CD8-positive, alpha-beta T cell (primary cell): ENCODE measurements at regions of chr5 and their contacts with region 1.

Region 1: GRCh38 chr5:127564002-127564769 is 46.7 kb downstream of the PRRC1 start:
- DNase-seq: peak in 7 of 9 experiments; percentile 12 to 77 (median 51)
- ATAC-seq: peak; percentile 72
- H3K4me3 ChIP-seq: no peak overlapping the region
- H3K4me3 Mint-ChIP-seq: no peak overlapping the region
- H3K27ac ChIP-seq: no peak overlapping the region
- H3K27ac Mint-ChIP-seq: no peak overlapping the region
- H3K4me1 ChIP-seq: no peaks in the 10 kb centered on the region
- H3K4me1 Mint-ChIP-seq: peaks cover 6% of the 10 kb centered on the region
- H3K27me3 ChIP-seq: no peaks in the 10 kb centered on the region
- H3K27me3 Mint-ChIP-seq: peaks cover 6% of the 10 kb centered on the region
- CTCF ChIP-seq: peak; percentile 71

Region 2: GRCh38 chr5:127785098-127785927 is 221.1 kb after region 1 on chr5:
- CTCF ChIA-PET with region 1: no interaction called
- POLR2A ChIA-PET with region 1: no interaction called
- intact Hi-C with region 1: no loop called
- DNase-seq: peak in 3 of 9 experiments; percentile 29 to 66 (median 64)
- ATAC-seq: peak; percentile 80
- H3K4me3 ChIP-seq: no peak overlapping the region
- H3K4me3 Mint-ChIP-seq: no peak overlapping the region
- H3K27ac ChIP-seq: peak overlapping the region in 1 of 2 experiments; percentile 45
- H3K27ac Mint-ChIP-seq: peak overlapping the region; percentile 81
- H3K4me1 ChIP-seq: no peaks in the 10 kb centered on the region
- H3K4me1 Mint-ChIP-seq: peaks cover 10% of the 10 kb centered on the region
- H3K27me3 ChIP-seq: no peaks in the 10 kb centered on the region
- H3K27me3 Mint-ChIP-seq: no peaks in the 10 kb centered on the region
- CTCF ChIP-seq: no peak

Region 3: GRCh38 chr5:128498844-128499455 is 934.8 kb after region 1 on chr5:
- CTCF ChIA-PET with region 1: no interaction called
- POLR2A ChIA-PET with region 1: no interaction called
- intact Hi-C with region 1: loop called in 1 of 2 experiments (anchors 5 kb)
- DNase-seq: peak in 1 of 9 experiments; percentile 4
- ATAC-seq: no peak
- H3K4me3 ChIP-seq: no peak overlapping the region
- H3K4me3 Mint-ChIP-seq: no peak overlapping the region
- H3K27ac ChIP-seq: no peak overlapping the region
- H3K27ac Mint-ChIP-seq: no peak overlapping the region
- H3K4me1 ChIP-seq: no peaks in the 10 kb centered on the region
- H3K4me1 Mint-ChIP-seq: no peaks in the 10 kb centered on the region
- H3K27me3 ChIP-seq: no peaks in the 10 kb centered on the region
- H3K27me3 Mint-ChIP-seq: no peaks in the 10 kb centered on the region
- CTCF ChIP-seq: no peak

Region 4: GRCh38 chr5:128674825-128675446 is 1110.8 kb after region 1 on chr5:
- CTCF ChIA-PET with region 1: interaction called, 4 read pairs
- POLR2A ChIA-PET with region 1: no interaction called
- intact Hi-C with region 1: loop called in 1 of 2 experiments (anchors 2 kb)
- DNase-seq: peak in 3 of 9 experiments; percentile 7 to 28 (median 18)
- ATAC-seq: no peak
- H3K4me3 ChIP-seq: no peak overlapping the region
- H3K4me3 Mint-ChIP-seq: no peak overlapping the region
- H3K27ac ChIP-seq: no peak overlapping the region
- H3K27ac Mint-ChIP-seq: no peak overlapping the region
- H3K4me1 ChIP-seq: no peaks in the 10 kb centered on the region
- H3K4me1 Mint-ChIP-seq: no peaks in the 10 kb centered on the region
- H3K27me3 ChIP-seq: no peaks in the 10 kb centered on the region
- H3K27me3 Mint-ChIP-seq: no peaks in the 10 kb centered on the region
- CTCF ChIP-seq: peak; percentile 53

Region 5: DNA sequence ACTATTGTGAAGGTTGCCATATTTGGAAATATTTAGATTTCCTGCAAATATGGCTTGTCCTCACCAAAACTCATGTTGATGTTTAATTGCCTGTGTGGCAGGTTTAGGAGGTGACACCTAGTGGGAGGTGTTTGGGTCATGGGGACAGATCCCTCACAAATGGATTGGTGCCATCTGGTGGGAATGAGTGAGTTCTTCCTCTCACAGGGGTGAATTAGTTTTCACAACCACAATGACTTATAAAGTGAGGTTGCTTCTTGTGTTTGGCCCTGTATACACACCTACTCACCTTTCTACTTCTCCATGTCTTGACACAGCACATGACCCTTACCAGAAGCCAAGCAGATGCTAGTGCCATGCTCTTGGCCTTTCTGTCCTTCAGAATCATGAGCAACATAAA is 1571.4 kb after region 1 on chr5:
- CTCF ChIA-PET with region 1: no interaction called
- POLR2A ChIA-PET with region 1: no interaction called
- intact Hi-C with region 1: loop called in 1 of 2 experiments (anchors 10 kb)
- DNase-seq: peak in 2 of 9 experiments; percentile 15 to 40
- ATAC-seq: no peak
- H3K4me3 ChIP-seq: no peak overlapping the region
- H3K4me3 Mint-ChIP-seq: no peak overlapping the region
- H3K27ac ChIP-seq: no peak overlapping the region
- H3K27ac Mint-ChIP-seq: no peak overlapping the region
- H3K4me1 ChIP-seq: no peaks in the 10 kb centered on the region
- H3K4me1 Mint-ChIP-seq: no peaks in the 10 kb centered on the region
- H3K27me3 ChIP-seq: no peaks in the 10 kb centered on the region
- H3K27me3 Mint-ChIP-seq: peaks cover 2% of the 10 kb centered on the region
- CTCF ChIP-seq: no peak